ENCODE measurements at regions of chr11 and their contacts with region 1.

Region 1: DNA sequence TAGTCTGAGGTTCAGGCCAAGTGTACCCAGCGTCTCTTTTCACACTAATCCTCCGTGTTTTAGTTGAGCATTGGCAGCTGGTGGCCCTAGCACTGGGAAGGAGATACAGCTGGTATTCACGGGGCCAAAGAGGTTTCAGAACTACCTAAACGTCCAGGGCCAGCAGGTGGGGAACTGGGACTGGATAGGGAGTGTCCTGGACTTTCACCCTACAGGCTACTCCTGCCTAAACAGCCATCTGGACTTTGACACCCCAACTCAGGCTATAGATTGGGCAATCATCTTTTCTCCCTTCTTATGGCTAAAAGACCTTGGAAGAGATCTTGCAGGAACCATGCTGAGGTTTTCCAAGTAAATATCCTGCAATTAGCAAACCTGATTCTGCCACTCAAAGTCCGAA is 2.8 kb downstream of the SPON1 start:
- DNase-seq: no peak
- ATAC-seq: no peak

Region 2: GRCh38 chr11:14041040-14041439 is 75.7 kb after region 1 on chr11:
- intact Hi-C with region 1: loop called (anchors 5 kb)
- DNase-seq: no peak
- ATAC-seq: no peak

Region 3: GRCh38 chr11:14249121-14249963 is 284.0 kb after region 1 on chr11:
- intact Hi-C with region 1: no loop called
- DNase-seq: peak; percentile 84
- ATAC-seq: peak; percentile 54